ENCODE measurements at regions of chr11 and their contacts with region 1.

Region 1: GRCh38 chr11:36746886-36747710 is 149.1 kb upstream of the RAG2 start:
- DNase-seq: peak; percentile 38 to 92
- H3K4me3 ChIP-seq: no peak overlapping the region
- H3K27ac ChIP-seq: no peak overlapping the region
- H3K4me1 ChIP-seq: peaks cover 0 to 4% of the 10 kb centered on the region in 2 donors
- H3K27me3 ChIP-seq: no peaks in the 10 kb centered on the region
- CTCF ChIP-seq: peak; percentile 82 to 98 (median 93)

Region 2: GRCh38 chr11:36091256-36091811 is 655.8 kb before region 1 on chr11:
- intact Hi-C with region 1: no loop called
- DNase-seq: no peak
- H3K4me3 ChIP-seq: no peak overlapping the region
- H3K27ac ChIP-seq: peak overlapping the region in 1 of 2 donors; percentile 2
- H3K4me1 ChIP-seq: peaks cover 0 to 5% of the 10 kb centered on the region in 2 donors
- H3K27me3 ChIP-seq: no peaks in the 10 kb centered on the region
- CTCF ChIP-seq: no peak

Region 3: GRCh38 chr11:36509694-36510566 is 237.2 kb before region 1 on chr11 and contains the start of gene TRAF6:
- intact Hi-C with region 1: loop called (anchors 5 kb)
- DNase-seq: peak; percentile 41 to 93
- H3K4me3 ChIP-seq: peak within 1 kb of the TSS; percentile 87 to 92
- H3K27ac ChIP-seq: peak within 1 kb of the TSS; percentile 86 to 91
- H3K4me1 ChIP-seq: peaks cover 0 to 3% of the 10 kb centered on the region in 2 donors
- H3K27me3 ChIP-seq: no peaks in the 10 kb centered on the region
- CTCF ChIP-seq: peak; percentile 85 to 90 (median 88)
- total RNA-seq, gene TRAF6: 4.8 TPM

Region 4: GRCh38 chr11:36564376-36565030 is 182.6 kb before region 1 on chr11:
- intact Hi-C with region 1: loop called (anchors 1 kb)
- DNase-seq: peak in 1 of 2 donors; percentile 68
- H3K4me3 ChIP-seq: peak overlapping the region; percentile 27 to 57
- H3K27ac ChIP-seq: no peak overlapping the region
- H3K4me1 ChIP-seq: no peaks in the 10 kb centered on the region
- H3K27me3 ChIP-seq: no peaks in the 10 kb centered on the region
- CTCF ChIP-seq: peak; percentile 53 to 75 (median 59)

Region 5: DNA sequence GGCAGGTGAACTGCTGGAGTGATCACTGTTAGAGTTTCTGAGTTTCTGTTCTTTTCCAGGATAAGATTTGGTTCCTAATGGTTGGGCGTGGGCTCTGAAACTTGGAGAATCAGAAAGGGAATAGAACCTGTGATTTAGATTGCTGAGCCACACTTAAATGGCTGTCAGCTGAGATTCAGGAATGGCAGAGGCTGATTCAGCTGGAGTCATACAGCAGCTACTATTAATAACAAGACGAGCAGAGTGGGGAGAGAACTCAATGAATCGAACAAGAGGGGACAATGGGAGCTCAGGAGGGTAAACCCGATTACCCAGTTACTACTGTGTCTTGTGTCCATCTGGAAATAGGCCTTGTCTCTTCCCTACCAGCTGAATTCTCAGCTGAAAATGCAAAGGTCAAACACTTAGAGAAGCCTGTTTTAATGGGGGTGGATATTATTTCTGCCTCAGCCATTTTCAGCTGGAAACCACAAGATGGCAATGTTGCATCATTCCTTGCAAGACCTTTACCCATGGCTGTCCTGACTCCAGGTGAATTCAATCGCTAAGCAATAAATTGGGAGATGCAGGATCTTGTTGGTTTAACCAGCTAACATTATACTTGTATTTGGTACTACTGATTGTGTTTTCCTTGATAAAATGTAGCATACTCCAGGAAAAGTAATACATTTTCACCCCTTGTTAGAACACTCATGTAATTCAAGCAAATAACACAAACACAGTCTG is 44.6 kb before region 1 on chr11:
- intact Hi-C with region 1: loop called (anchors 1 kb)
- DNase-seq: no peak
- H3K4me3 ChIP-seq: no peak overlapping the region
- H3K27ac ChIP-seq: no peak overlapping the region
- H3K4me1 ChIP-seq: no peaks in the 10 kb centered on the region
- H3K27me3 ChIP-seq: no peaks in the 10 kb centered on the region
- CTCF ChIP-seq: peak; percentile 70 to 82 (median 76)

Measured in ascending aorta (tissue), 2 donors.